H1 (cell line): ENCODE measurements at regions of chr12 and their contacts with region 1.

Region 1: DNA sequence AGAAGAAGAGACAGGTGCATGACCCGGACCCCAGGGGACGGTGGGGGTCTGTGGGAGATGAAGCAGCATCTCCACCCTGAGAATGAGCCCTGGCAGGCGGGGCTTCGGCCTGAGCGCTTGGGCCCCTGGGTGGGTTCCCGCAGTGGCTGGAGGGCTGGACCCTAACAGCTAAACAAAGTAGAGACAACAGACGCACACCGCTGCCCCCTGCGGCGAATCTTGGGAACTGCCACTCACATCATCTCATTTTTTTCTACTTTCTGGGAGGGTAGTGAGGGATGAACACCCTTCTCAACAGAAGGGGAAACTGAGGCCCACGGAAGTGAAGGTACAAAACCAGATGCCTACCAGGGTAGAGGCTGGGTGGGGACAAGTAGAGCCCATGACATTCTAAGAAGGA is 104.7 kb downstream of the RFLNA start:
- DNase-seq: peak in 1 of 2 experiments; percentile 76
- H3K4me3 ChIP-seq: no peak overlapping the region
- H3K27ac ChIP-seq: no peak overlapping the region
- H3K4me1 ChIP-seq: peaks cover 0 to 12% (median 3%) of the 10 kb centered on the region in 4 experiments; a peak in 5 of 7 replicates
- H3K27me3 ChIP-seq: no peaks in the 10 kb centered on the region
- CTCF ChIP-seq: peak in 2 of 3 experiments; percentile 46 to 55; a peak in 3 of 4 replicates
- EP300 ChIP-seq: no peak
- POLR2A ChIP-seq: no peak
- RAD21 ChIP-seq: peak; percentile 37 to 50; a peak in 2 of 4 replicates

Region 2: DNA sequence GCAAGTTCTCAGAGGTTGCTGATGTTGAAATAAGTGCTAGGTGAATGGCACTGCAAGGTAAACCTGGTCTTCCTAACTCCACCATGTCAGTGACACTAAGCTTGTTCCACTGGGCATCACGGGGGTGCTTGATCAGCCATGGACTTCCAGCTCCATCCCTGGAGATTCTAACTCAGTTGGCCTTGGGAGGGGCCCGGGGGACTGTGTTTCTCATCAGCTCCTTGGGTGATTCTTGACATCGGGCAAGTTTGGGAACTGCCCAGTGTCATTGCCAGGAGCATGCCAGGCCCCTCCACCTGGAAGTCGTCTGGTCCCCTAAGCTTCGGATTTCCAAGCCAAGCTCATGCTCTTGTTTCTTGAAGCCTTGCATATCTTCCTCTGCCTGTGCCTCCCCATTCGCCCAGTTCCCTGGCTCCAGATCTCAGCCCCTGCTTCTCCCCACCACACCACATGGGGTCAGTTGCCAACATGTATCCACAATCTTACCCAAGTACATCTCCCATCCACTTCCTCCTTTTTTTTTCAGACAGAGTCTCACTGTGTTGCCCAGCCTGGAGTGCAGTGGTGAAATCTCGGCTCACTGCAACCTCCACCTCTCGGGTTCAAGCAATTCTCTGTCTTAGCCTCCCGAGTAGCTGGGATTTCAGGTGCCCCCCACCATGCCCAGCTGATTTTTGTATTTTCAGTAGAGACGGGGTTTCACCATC is 135.4 kb before region 1 on chr12:
- CTCF ChIA-PET with region 1: no interaction called
- POLR2A ChIA-PET with region 1: no interaction called
- DNase-seq: no peak
- H3K4me3 ChIP-seq: no peak overlapping the region
- H3K27ac ChIP-seq: no peak overlapping the region
- H3K4me1 ChIP-seq: no peaks in the 10 kb centered on the region
- H3K27me3 ChIP-seq: no peaks in the 10 kb centered on the region
- CTCF ChIP-seq: no peak
- EP300 ChIP-seq: no peak
- POLR2A ChIP-seq: no peak
- RAD21 ChIP-seq: no peak

Region 3: DNA sequence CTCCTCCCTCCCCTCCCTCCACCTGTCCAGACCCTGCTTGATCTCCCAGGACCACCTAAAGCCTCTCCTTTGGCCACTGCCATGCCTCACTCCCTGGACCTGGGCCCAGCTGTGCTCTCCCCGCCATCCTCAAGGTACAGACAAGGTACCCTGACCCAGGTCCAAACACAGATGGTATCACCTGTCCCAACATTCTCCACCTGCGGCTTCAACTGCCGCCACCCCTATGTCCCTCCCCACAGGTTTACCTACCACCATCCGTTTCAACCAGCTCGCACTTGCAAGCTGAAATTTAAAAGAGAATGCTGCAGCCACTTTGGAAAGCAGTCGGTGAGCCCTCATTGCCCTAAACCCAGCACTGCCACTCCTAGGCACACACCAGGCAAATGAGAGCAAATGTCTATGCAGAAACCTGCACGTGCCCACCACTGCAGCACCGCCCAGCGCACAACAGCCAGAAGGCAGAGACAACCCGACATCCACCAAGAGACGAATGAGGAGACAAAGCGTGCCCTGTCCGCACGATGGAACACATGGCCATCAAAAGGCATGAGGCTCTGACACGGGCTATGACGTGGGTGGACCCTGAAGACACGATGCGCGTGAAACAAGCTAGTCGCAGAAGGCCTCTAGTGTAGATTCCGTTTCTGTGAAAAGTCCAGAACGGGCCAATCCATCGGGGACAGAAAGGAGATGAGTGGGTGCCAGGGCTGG is 33.7 kb before region 1 on chr12:
- CTCF ChIA-PET with region 1: interaction called, 10 read pairs
- POLR2A ChIA-PET with region 1: no interaction called
- DNase-seq: no peak
- H3K4me3 ChIP-seq: no peak overlapping the region
- H3K27ac ChIP-seq: no peak overlapping the region
- H3K4me1 ChIP-seq: no peaks in the 10 kb centered on the region
- H3K27me3 ChIP-seq: no peaks in the 10 kb centered on the region
- CTCF ChIP-seq: no peak
- EP300 ChIP-seq: no peak
- POLR2A ChIP-seq: no peak
- RAD21 ChIP-seq: no peak

Region 4: GRCh38 chr12:124379938-124380754 is 19.5 kb before region 1 on chr12:
- CTCF ChIA-PET with region 1: interaction called, 60 read pairs
- POLR2A ChIA-PET with region 1: interaction called, 9 read pairs
- DNase-seq: no peak
- H3K4me3 ChIP-seq: no peak overlapping the region
- H3K27ac ChIP-seq: no peak overlapping the region
- H3K4me1 ChIP-seq: no peaks in the 10 kb centered on the region
- H3K27me3 ChIP-seq: no peaks in the 10 kb centered on the region
- CTCF ChIP-seq: peak in 1 of 3 experiments; percentile 2; a peak in 1 of 4 replicates
- EP300 ChIP-seq: no peak
- POLR2A ChIP-seq: no peak
- RAD21 ChIP-seq: peak in 1 of 2 experiments; percentile 20; a peak in 1 of 4 replicates

Region 5: GRCh38 chr12:124388679-124389536 is 10.7 kb before region 1 on chr12:
- CTCF ChIA-PET with region 1: interaction called, 60 read pairs
- POLR2A ChIA-PET with region 1: interaction called, 4 read pairs
- DNase-seq: peak in 1 of 2 experiments; percentile 76
- H3K4me3 ChIP-seq: peak overlapping the region; percentile 38 to 73 (median 54)
- H3K27ac ChIP-seq: no peak overlapping the region
- H3K4me1 ChIP-seq: peaks cover 0 to 25% (median 17%) of the 10 kb centered on the region in 4 experiments; a peak in 6 of 7 replicates
- H3K27me3 ChIP-seq: no peaks in the 10 kb centered on the region
- CTCF ChIP-seq: no peak
- EP300 ChIP-seq: no peak
- POLR2A ChIP-seq: no peak
- RAD21 ChIP-seq: no peak

Region 6: GRCh38 chr12:124411281-124411878 is 11.8 kb after region 1 on chr12:
- CTCF ChIA-PET with region 1: interaction called, 16 read pairs
- POLR2A ChIA-PET with region 1: interaction called, 5 read pairs
- DNase-seq: no peak
- H3K4me3 ChIP-seq: no peak overlapping the region
- H3K27ac ChIP-seq: no peak overlapping the region
- H3K4me1 ChIP-seq: peaks cover 0 to 18% (median 9%) of the 10 kb centered on the region in 4 experiments; a peak in 6 of 7 replicates
- H3K27me3 ChIP-seq: no peaks in the 10 kb centered on the region
- CTCF ChIP-seq: no peak
- EP300 ChIP-seq: no peak
- POLR2A ChIP-seq: no peak
- RAD21 ChIP-seq: no peak

Region 7: GRCh38 chr12:124506145-124506831 is 106.7 kb after region 1 on chr12:
- CTCF ChIA-PET with region 1: no interaction called
- POLR2A ChIA-PET with region 1: no interaction called
- DNase-seq: no peak
- H3K4me3 ChIP-seq: no peak overlapping the region
- H3K27ac ChIP-seq: no peak overlapping the region
- H3K4me1 ChIP-seq: peaks cover 3 to 79% (median 55%) of the 10 kb centered on the region in 4 experiments
- H3K27me3 ChIP-seq: no peaks in the 10 kb centered on the region
- CTCF ChIP-seq: no peak
- EP300 ChIP-seq: no peak
- POLR2A ChIP-seq: no peak
- RAD21 ChIP-seq: no peak; a peak in 1 of 4 replicates

Region 8: GRCh38 chr12:124609041-124609995 is 209.7 kb after region 1 on chr12:
- CTCF ChIA-PET with region 1: no interaction called
- POLR2A ChIA-PET with region 1: no interaction called
- DNase-seq: no peak
- H3K4me3 ChIP-seq: no peak overlapping the region
- H3K27ac ChIP-seq: no peak overlapping the region
- H3K4me1 ChIP-seq: peaks cover 0 to 9% (median 5%) of the 10 kb centered on the region in 4 experiments; a peak in 5 of 7 replicates
- H3K27me3 ChIP-seq: 0 out of 7 replicates have a peak, but pooled peaks cover 0 to 2% (median 0%) of the 10 kb centered on the region in 4 experiments
- CTCF ChIP-seq: no peak
- EP300 ChIP-seq: no peak
- POLR2A ChIP-seq: no peak
- RAD21 ChIP-seq: no peak